SK-MEL-5 (cell line): ENCODE measurements at regions of chr11 and their contacts with region 1.

Region 1: GRCh38 chr11:74909385-74909784 is 39.5 kb downstream of the XRRA1 start:
- DNase-seq: no peak

Region 2: DNA sequence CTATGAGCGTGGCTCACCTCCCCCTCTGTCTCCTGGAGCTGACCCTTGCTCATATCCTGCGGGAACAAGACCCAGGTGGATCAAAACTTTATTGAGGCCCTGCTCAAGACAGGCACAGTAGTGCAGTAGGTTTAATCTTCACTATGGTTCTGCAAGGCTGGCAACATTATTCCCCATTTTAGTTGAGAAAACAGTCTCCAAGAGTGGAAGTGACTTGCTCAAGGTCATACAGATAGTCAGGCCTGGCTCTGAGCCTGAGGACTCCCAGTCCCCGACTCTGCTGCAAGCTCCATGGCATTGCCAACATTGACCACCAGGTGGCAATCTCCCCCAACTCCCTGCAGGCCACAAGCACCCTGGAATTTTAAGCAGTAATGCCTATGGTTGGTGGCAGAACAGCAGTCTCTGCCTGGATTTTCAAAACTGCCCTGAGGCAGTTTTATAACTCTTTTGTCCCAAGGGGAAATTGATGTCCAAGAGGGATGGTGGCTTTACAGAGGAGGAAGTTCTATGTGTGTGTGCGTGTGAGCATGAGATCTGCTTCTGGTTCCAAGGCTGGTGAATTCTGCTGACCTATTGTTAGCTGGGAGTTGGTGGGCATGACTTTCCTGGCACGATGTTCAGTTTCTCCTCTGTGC is 113.5 kb after region 1 on chr11:
- in situ Hi-C with region 1: loop called (anchors 25 kb)
- DNase-seq: peak; percentile 97

Region 3: GRCh38 chr11:75280227-75280701 is 370.9 kb after region 1 on chr11:
- in situ Hi-C with region 1: no loop called
- DNase-seq: peak; percentile 86